ENCODE measurements at regions of chr1 and their contacts with region 1.

Region 1: DNA sequence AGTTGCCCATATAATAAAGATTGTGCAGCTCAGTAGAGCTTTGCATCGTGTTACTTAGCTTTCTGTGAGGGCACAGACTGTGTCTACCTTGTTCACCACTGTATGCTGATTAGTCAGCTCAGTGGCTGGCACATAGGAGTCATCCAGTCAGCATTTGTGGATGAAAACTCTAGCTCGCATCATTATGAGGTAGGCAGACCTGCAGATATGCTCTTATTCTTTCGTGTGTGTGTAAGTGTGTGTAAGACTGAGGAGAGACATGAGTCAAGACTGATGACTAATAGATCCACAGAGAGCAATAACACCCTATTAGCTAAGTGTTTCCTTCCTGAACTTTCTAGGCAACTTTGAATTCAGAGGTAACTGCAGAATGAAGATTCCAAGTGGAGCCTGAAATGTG is 17.1 kb downstream of the TTF2 start:
- DNase-seq: peak; percentile 30
- ATAC-seq: no peak
- H3K4me3 Mint-ChIP-seq: no peak overlapping the region
- H3K27ac Mint-ChIP-seq: peak overlapping the region; percentile 1
- H3K4me1 Mint-ChIP-seq: no peaks in the 10 kb centered on the region
- H3K27me3 Mint-ChIP-seq: no peaks in the 10 kb centered on the region

Region 2: GRCh38 chr1:117093870-117094621 is 16.8 kb after region 1 on chr1:
- CTCF ChIA-PET with region 1: interaction called, 67 read pairs
- POLR2A ChIA-PET with region 1: interaction called, 3 read pairs
- DNase-seq: peak; percentile 65
- ATAC-seq: peak; percentile 92
- H3K4me3 Mint-ChIP-seq: no peak overlapping the region
- H3K27ac Mint-ChIP-seq: peak overlapping the region; percentile 50
- H3K4me1 Mint-ChIP-seq: peaks cover 16% of the 10 kb centered on the region
- H3K27me3 Mint-ChIP-seq: no peaks in the 10 kb centered on the region